Activated CD8-positive, alpha-beta T cell treated with anti-CD3 and anti-CD28 coated beads for 36 hours (primary cell): ENCODE measurements at regions of chr6 and their contacts with region 1.

Region 1: GRCh38 chr6:127951172-127951917 is 50.5 kb upstream of the THEMIS start:
- DNase-seq: no peak
- ATAC-seq: peak; percentile 53
- H3K4me3 Mint-ChIP-seq: peak overlapping the region; percentile 49
- H3K27ac Mint-ChIP-seq: peak overlapping the region; percentile 94
- H3K4me1 Mint-ChIP-seq: peaks cover 68% of the 10 kb centered on the region
- H3K27me3 Mint-ChIP-seq: no peaks in the 10 kb centered on the region
- CTCF ChIP-seq: no peak

Region 2: DNA sequence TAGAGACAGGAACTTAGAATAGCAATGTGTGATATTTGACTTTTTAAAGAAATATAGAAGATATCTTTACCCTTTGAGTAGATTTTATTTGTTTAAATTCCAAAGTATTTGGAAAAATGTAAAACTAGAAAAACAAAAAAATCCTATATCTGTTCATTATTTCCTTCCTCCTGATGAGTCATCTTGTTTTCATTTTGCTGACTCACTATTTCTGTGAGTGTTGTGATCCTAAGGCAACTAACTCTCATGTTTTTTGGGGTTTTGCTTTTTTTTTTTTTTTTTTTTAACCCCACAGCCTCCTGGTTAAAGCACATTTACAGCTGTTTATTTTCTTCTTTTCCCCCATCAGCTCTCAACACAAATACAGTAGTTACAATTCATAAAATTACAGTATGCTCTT is 12.6 kb before region 1 on chr6:
- CTCF ChIA-PET with region 1: interaction called, 14 read pairs
- POLR2A ChIA-PET with region 1: interaction called, 4 read pairs
- intact Hi-C with region 1: no loop called
- DNase-seq: no peak
- ATAC-seq: peak; percentile 24
- H3K4me3 Mint-ChIP-seq: no peak overlapping the region
- H3K27ac Mint-ChIP-seq: peak overlapping the region; percentile 82
- H3K4me1 Mint-ChIP-seq: peaks cover 67% of the 10 kb centered on the region
- H3K27me3 Mint-ChIP-seq: no peaks in the 10 kb centered on the region
- CTCF ChIP-seq: no peak